Esophagus muscularis mucosa (tissue), 4 donors: ENCODE measurements at regions of chr17 and their contacts with region 1.

Region 1: GRCh38 chr17:81636505-81637288 is at the starts of genes NPLOC4 and TSPAN10:
- DNase-seq: peak; percentile 96
- H3K4me3 ChIP-seq: peak within 1 kb of the TSS; percentile 89 to 98 (median 94)
- H3K27ac ChIP-seq: peak within 1 kb of the TSS; percentile 88 to 97 (median 92)
- H3K4me1 ChIP-seq: peaks cover 35 to 44% (median 40%) of the 10 kb centered on the region in 4 donors
- H3K27me3 ChIP-seq: no peaks in the 10 kb centered on the region
- CTCF ChIP-seq: peak in 1 of 3 experiments; percentile 32
- EP300 ChIP-seq: no peak
- POLR2A ChIP-seq: peak; percentile 64
- total RNA-seq, gene NPLOC4: 58.1 to 86.6 (median 65.7) TPM
- total RNA-seq, gene TSPAN10: 0.32 to 0.92 TPM in 2 of 4 donors, not detected in the others

Region 2: DNA sequence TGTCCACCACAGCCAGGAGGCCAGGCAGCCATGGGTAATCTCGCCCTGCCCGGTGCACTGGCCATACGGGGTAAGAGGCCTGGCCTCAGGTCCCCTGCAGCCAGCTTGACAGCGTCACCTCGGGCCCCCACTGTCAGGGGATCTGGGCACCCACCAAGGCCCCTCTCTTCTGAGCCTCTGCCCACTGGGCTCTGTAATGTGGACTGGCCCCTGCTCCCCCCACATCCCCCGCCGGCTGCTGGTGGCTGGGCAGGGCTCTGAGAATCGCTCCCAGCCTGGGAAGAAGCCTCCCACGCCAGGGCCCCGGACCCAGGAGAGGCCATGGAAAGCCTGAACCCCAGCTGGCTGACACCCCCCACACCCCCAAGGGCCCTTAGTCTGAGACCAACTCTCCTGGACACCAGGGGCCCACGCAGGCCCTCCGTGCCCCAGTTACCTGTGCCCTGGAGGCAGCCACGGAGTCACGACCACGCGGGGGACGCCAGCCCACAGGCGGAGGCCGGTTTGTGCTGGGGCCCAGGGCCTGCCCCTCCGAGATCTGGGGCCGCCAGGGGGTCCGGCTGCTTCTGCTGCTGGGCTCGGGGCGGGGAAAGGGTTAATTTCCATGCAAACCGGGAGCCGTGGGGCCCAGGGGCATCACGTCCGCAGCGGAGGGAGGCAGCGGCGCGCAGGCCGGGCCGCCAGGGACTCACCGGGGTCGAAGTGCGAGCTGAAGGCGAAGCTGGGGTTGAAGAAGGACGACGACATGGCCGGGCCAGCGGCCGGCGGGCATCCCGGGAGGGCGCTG is 471.3 kb before region 1 on chr17 and contains the start of gene PVALEF:
- intact Hi-C with region 1: no loop called
- DNase-seq: no peak
- H3K4me3 ChIP-seq: peak within 1 kb of the TSS; percentile 55 to 65 (median 58)
- H3K27ac ChIP-seq: peak within 1 kb of the TSS; percentile 48 to 70 (median 56)
- H3K4me1 ChIP-seq: peaks cover 10 to 28% (median 27%) of the 10 kb centered on the region in 4 donors
- H3K27me3 ChIP-seq: peaks cover 0 to 14% (median 2%) of the 10 kb centered on the region in 4 donors
- CTCF ChIP-seq: no peak
- EP300 ChIP-seq: no peak
- POLR2A ChIP-seq: no peak
- total RNA-seq, gene PVALEF: not detected

Region 3: DNA sequence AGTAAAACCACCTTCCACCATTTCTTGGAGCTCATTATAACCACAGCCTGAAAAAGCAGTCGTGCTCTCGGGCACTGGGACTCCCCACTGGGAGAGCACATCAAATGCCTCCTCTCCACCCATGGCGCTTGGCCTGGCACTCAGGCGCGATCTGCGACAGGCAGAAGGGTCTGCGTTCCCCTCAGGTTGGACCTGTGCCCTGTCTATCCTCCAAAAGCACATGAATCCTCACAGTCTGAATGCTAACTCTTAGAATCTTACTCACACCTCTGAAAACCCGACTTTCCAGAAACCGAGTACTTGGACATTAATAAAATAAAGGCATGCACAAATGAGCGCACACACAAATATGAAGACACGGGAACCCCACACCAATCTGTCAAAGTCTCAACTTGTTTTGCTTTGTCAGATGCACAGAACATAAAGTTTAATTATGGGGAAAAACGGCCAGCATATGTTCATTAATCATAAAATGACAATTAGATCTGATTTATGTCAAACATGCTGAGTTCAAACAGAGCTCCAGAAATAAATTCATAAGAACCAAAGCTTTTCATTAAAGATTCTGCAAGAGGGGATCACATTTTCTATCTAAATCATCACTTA is 64.0 kb before region 1 on chr17:
- intact Hi-C with region 1: no loop called
- DNase-seq: no peak
- H3K4me3 ChIP-seq: no peak overlapping the region
- H3K27ac ChIP-seq: no peak overlapping the region
- H3K4me1 ChIP-seq: peaks cover 1 to 26% (median 21%) of the 10 kb centered on the region in 4 donors
- H3K27me3 ChIP-seq: no peaks in the 10 kb centered on the region
- CTCF ChIP-seq: no peak
- EP300 ChIP-seq: no peak
- POLR2A ChIP-seq: no peak

Region 4: GRCh38 chr17:81607431-81607830 is 29.3 kb before region 1 on chr17:
- intact Hi-C with region 1: no loop called
- DNase-seq: no peak
- H3K4me3 ChIP-seq: no peak overlapping the region
- H3K27ac ChIP-seq: no peak overlapping the region
- H3K4me1 ChIP-seq: peaks cover 0 to 5% (median 3%) of the 10 kb centered on the region in 4 donors
- H3K27me3 ChIP-seq: no peaks in the 10 kb centered on the region
- CTCF ChIP-seq: no peak
- EP300 ChIP-seq: no peak
- POLR2A ChIP-seq: no peak

Region 5: DNA sequence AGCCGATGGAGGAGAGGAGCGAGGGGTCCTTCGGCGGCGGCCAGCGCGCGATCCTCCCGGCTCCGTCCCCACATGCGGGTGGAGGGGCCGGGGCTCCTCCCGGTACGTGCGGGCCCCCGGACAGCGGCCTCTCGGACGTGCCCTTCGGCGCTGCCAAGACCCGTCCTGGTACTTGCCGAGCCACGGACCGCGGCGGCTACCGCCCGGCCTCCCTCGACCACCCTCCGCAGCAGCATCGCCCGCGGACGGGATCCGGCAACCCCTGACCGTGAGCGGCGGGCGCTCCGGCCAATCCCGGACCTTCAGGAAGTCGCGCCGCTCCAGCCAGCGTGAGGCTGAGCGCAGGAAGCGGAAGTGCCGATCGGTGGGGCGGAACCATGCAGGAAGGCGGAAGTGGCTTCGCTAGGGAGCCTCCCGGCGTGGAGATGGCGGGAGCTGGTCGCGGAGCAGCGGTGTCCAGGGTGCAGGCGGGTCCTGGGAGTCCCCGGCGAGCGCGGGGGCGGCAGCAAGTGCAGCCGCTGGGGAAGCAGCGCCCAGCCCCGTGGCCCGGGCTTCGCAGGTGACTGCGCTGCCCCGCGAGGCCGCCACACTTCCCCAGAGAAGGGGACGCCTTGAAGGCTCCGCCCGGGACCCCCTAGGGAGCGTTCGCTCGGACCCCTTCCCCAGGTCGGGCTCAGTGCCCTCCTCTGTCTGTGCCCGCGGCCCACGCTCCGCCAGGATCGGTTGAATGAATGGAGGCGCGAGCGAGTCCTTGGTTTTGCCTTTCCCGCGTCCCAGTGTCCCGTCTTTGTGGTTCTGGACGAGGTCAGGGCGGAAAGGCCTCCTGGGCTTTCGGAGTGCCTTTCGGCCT is 29.9 kb after region 1 on chr17 and contains the starts of genes CCDC137 and OXLD1:
- intact Hi-C with region 1: loop called (anchors 2 kb)
- DNase-seq: peak; percentile 98
- H3K4me3 ChIP-seq: peak within 1 kb of the TSS; percentile 90 to 100 (median 96)
- H3K27ac ChIP-seq: peak within 1 kb of the TSS; percentile 79 to 93 (median 88)
- H3K4me1 ChIP-seq: peaks cover 21 to 35% (median 30%) of the 10 kb centered on the region in 4 donors
- H3K27me3 ChIP-seq: no peaks in the 10 kb centered on the region
- CTCF ChIP-seq: no peak
- EP300 ChIP-seq: no peak
- POLR2A ChIP-seq: peak; percentile 55
- total RNA-seq, gene CCDC137: 8.9 to 14.1 (median 12.6) TPM
- total RNA-seq, gene OXLD1: 24.5 to 40.5 (median 31.1) TPM

Region 6: GRCh38 chr17:81722184-81723120 is 85.8 kb after region 1 on chr17:
- intact Hi-C with region 1: no loop called
- DNase-seq: no peak
- H3K4me3 ChIP-seq: no peak overlapping the region
- H3K27ac ChIP-seq: no peak overlapping the region
- H3K4me1 ChIP-seq: peaks cover 7 to 17% (median 13%) of the 10 kb centered on the region in 4 donors
- H3K27me3 ChIP-seq: peaks cover 0 to 39% (median 1%) of the 10 kb centered on the region in 4 donors
- CTCF ChIP-seq: no peak
- EP300 ChIP-seq: no peak
- POLR2A ChIP-seq: no peak